RWPE1 (cell line): ENCODE measurements at regions of chr4 and their contacts with region 1.

Region 1: GRCh38 chr4:121192480-121192879 is 28.4 kb upstream of the TNIP3 start:
- DNase-seq: peak; percentile 13
- H3K27ac ChIP-seq: no peak overlapping the region
- CTCF ChIP-seq: peak; percentile 85

Region 2: GRCh38 chr4:121016630-121017029 is 175.8 kb before region 1 on chr4:
- CTCF ChIA-PET with region 1: no interaction called
- POLR2A ChIA-PET with region 1: no interaction called
- DNase-seq: no peak
- H3K27ac ChIP-seq: no peak overlapping the region
- CTCF ChIP-seq: no peak

Region 3: DNA sequence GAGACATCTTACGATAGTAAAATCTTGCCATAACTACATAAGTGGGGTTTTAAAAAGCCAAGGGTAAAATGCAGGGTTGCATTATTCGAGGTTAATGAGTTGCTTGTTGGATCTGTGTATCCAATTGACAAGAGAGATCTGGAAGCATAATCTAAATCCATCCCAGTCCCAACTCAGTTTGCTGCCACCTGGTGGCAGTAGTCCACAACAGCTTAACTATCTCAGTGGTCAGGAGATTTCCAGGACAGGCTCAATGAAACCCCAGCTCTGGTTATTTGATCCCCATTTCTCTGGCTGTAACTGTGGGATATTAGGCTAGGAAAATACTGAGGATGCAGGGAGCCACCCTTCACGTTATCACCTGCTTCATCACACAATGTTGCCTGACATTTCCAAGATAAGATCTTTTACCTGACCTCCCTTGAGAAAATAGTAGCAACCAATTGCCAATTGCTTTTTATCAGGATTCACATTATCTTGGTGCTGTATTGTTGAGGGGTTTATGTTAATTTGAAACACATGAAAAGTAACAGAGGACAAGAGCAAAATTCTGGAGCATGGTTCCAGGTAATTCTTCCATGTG is 59.8 kb after region 1 on chr4:
- CTCF ChIA-PET with region 1: interaction called, 12 read pairs
- POLR2A ChIA-PET with region 1: no interaction called
- DNase-seq: peak; percentile 66
- H3K27ac ChIP-seq: no peak overlapping the region
- CTCF ChIP-seq: peak; percentile 87

Region 4: DNA sequence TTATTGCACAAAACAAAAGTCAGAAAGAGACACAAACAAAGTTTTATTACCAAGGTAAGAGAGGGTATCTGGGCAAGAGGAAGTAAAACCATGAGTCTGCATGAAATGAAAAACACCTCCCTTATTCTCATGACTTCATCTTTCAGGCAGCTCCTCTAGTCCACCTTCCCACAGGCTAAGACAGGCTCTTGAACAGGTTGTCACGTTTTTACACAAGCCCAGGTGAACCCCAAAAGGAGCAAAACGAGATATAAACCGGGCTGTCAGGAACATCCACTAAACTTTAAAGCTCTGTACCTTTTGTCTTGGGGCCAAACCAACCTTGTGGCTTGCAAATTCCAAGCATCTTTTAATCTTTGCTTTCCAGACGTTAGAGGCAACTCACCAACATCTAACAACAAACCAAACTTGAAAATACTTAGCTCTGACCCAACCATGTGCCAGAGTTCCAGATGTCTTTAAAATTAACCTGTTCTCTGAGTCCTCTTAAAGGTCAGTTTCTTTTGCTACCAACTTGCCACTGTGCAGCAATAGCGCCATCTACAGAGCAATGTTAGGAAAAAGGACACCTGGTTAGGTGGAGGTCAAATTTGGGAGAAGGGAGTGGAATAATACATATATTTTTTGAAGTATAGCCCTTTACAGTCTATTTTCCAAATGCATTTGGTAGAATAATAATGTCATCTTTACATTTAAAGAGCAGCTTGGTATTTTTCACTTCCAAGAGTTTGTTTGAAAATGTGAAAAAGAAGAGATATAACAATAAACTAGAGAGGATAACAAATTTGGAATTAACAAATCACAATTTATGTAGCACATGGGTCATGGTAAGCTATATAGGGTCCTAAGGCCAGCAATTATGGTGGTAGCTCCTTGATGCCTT is 115.2 kb after region 1 on chr4:
- CTCF ChIA-PET with region 1: interaction called, 13 read pairs
- POLR2A ChIA-PET with region 1: no interaction called
- DNase-seq: peak; percentile 45
- H3K27ac ChIP-seq: no peak overlapping the region
- CTCF ChIP-seq: peak; percentile 75